ENCODE measurements at regions of chr10 and their contacts with region 1.

Region 1: DNA sequence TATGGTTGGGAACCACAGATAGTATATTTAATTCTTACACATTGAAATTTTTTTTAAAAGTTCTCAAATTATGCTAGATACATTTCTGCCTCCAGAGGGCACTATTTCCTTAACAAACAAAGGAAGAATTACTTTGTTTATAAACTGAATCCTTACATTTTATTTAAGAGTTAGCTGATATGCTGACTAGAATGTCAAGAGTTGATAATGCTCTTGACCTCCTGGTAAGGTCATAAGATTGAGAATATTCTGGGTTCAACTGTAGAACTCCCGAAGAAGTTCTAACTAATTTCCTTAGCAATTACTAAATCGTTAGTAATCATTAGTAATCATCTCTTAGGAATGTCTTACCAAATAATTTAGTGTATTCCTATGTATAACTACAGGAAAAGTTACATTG is 95.3 kb upstream of the CYP26C1 start:
- DNase-seq: no peak
- H3K4me3 Mint-ChIP-seq: no peak overlapping the region
- H3K27ac Mint-ChIP-seq: no peak overlapping the region
- H3K4me1 Mint-ChIP-seq: no peaks in the 10 kb centered on the region
- H3K27me3 Mint-ChIP-seq: no peaks in the 10 kb centered on the region

Region 2: GRCh38 chr10:91879515-91880170 is 1085.7 kb before region 1 on chr10:
- intact Hi-C with region 1: no loop called
- DNase-seq: no peak
- H3K4me3 Mint-ChIP-seq: no peak overlapping the region
- H3K27ac Mint-ChIP-seq: no peak overlapping the region
- H3K4me1 Mint-ChIP-seq: no peaks in the 10 kb centered on the region
- H3K27me3 Mint-ChIP-seq: peaks cover 19% of the 10 kb centered on the region

Region 3: DNA sequence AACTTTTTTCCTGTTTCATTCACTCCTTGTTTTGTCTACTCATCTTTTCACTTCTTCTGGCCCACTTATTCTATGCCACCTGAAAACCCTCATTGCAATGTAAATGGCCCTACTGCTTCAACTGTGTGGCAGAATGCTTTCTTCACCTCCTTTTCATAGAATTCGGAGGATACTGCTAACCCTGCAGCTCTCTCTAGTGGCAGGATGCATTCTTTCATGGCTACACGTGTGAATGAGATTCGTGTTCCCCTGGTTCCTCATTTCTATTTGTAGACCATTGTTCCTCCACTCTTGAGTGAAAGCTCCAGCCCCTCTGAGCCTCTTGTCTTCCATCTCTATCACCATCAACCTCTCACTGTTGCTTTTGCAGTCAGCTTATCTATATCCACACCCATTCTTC is 74.4 kb after region 1 on chr10:
- intact Hi-C with region 1: loop called (anchors 1 kb)
- DNase-seq: no peak
- H3K4me3 Mint-ChIP-seq: no peak overlapping the region
- H3K27ac Mint-ChIP-seq: no peak overlapping the region
- H3K4me1 Mint-ChIP-seq: no peaks in the 10 kb centered on the region
- H3K27me3 Mint-ChIP-seq: no peaks in the 10 kb centered on the region

Region 4: GRCh38 chr10:93068411-93069244 is 103.3 kb after region 1 on chr10:
- intact Hi-C with region 1: loop called (anchors 5 kb)
- DNase-seq: no peak
- H3K4me3 Mint-ChIP-seq: no peak overlapping the region
- H3K27ac Mint-ChIP-seq: no peak overlapping the region
- H3K4me1 Mint-ChIP-seq: peaks cover 13% of the 10 kb centered on the region
- H3K27me3 Mint-ChIP-seq: peaks cover 84% of the 10 kb centered on the region

Measured in activated T-helper 2 cell treated with anti-CD3 and anti-CD28 coated beads, Interferon-gamma antibody, Interleukin-2, Interleukin-4, amounts not matched to agents 10 μg/mL and 5 μg/mL and 100 μg/mL, durations not matched to agents 14 hours and 24 hours and 36 hours (primary cell).